Uterus (tissue), 4 donors: ENCODE measurements at regions of chr17 and their contacts with region 1.

Region 1: GRCh38 chr17:31015639-31016038 is 44.8 kb downstream of the RNF135 start:
- DNase-seq: no peak
- H3K4me3 ChIP-seq: no peak overlapping the region
- H3K27ac ChIP-seq: no peak overlapping the region
- H3K4me1 ChIP-seq: no peaks in the 10 kb centered on the region
- H3K27me3 ChIP-seq: no peaks in the 10 kb centered on the region
- CTCF ChIP-seq: no peak
- POLR2A ChIP-seq: no peak

Region 2: GRCh38 chr17:30906101-30906911 is 109.3 kb before region 1 on chr17 and contains the start of gene TEFM:
- intact Hi-C with region 1: no loop called
- DNase-seq: peak; percentile 80 to 91
- H3K4me3 ChIP-seq: peak within 1 kb of the TSS; percentile 78 to 82
- H3K27ac ChIP-seq: peak within 1 kb of the TSS; percentile 88 to 89
- H3K4me1 ChIP-seq: peaks cover 0 to 12% of the 10 kb centered on the region in 2 donors
- H3K27me3 ChIP-seq: no peaks in the 10 kb centered on the region
- CTCF ChIP-seq: peak in 2 of 4 experiments; percentile 19 to 31
- POLR2A ChIP-seq: peak in 1 of 2 donors; percentile 47
- total RNA-seq, gene TEFM: 7.4 to 47.4 (median 28.6) TPM

Region 3: GRCh38 chr17:31216053-31216751 is 200.6 kb after region 1 on chr17:
- intact Hi-C with region 1: loop called (anchors 10 kb)
- DNase-seq: peak in 1 of 2 donors; percentile 30
- H3K4me3 ChIP-seq: no peak overlapping the region
- H3K27ac ChIP-seq: peak overlapping the region; percentile 55 to 71
- H3K4me1 ChIP-seq: peaks cover 0 to 6% of the 10 kb centered on the region in 2 donors
- H3K27me3 ChIP-seq: no peaks in the 10 kb centered on the region
- CTCF ChIP-seq: peak; percentile 52 to 66 (median 62)
- POLR2A ChIP-seq: no peak